OCI-LY7 (cell line): ENCODE measurements at regions of chr12 and their contacts with region 1.

Region 1: GRCh38 chr12:124543052-124543589 is 24.3 kb downstream of the NCOR2 start:
- DNase-seq: peak; percentile 74
- H3K4me3 ChIP-seq: peak overlapping the region; percentile 49
- H3K27ac ChIP-seq: peak overlapping the region; percentile 52
- H3K4me1 ChIP-seq: peaks cover 36% of the 10 kb centered on the region
- CTCF ChIP-seq: no peak

Region 2: GRCh38 chr12:124311292-124312109 is 231.6 kb before region 1 on chr12:
- CTCF ChIA-PET with region 1: no interaction called
- POLR2A ChIA-PET with region 1: no interaction called
- intact Hi-C with region 1: no loop called
- DNase-seq: no peak
- H3K4me3 ChIP-seq: no peak overlapping the region
- H3K27ac ChIP-seq: no peak overlapping the region
- H3K4me1 ChIP-seq: no peaks in the 10 kb centered on the region
- CTCF ChIP-seq: no peak

Region 3: GRCh38 chr12:124609041-124609995 is 66.2 kb after region 1 on chr12:
- CTCF ChIA-PET with region 1: interaction called, 3 read pairs
- POLR2A ChIA-PET with region 1: interaction called, 3 read pairs
- intact Hi-C with region 1: loop called (anchors 1 kb)
- DNase-seq: peak; percentile 96
- H3K4me3 ChIP-seq: peak overlapping the region; percentile 48
- H3K27ac ChIP-seq: peak overlapping the region; percentile 89
- H3K4me1 ChIP-seq: peaks cover 39% of the 10 kb centered on the region
- CTCF ChIP-seq: peak; percentile 24; the same call in 1 of the 2 replicates